Caco-2 (cell line): ENCODE measurements at regions of chr7 and their contacts with region 1.

Region 1: DNA sequence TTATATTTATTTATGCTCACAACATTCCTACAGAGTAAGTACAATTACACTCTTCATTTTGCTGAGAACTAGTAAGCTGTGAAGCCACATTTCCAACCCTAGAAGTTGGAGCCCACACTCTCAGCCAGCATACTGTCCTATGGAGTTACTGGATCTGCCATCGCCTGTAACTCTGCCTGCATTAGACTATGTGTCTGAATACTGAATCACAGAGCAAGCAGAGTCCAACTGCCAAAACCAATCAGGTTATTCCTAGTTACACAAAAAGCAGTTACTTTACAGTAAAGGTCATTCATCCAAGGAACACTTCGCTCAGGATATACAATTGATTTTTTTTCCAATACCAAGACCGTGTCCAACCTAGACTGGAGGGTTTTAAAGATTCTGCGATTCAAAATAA is 21.5 kb downstream of the CTAGE6 start:
- DNase-seq: no peak
- H3K4me3 ChIP-seq: no peak overlapping the region
- H3K4me3 Mint-ChIP-seq: no peak overlapping the region
- H3K27ac Mint-ChIP-seq: no peak overlapping the region
- H3K4me1 ChIP-seq: no peaks in the 10 kb centered on the region
- H3K4me1 Mint-ChIP-seq: no peaks in the 10 kb centered on the region
- H3K27me3 ChIP-seq: no peaks in the 10 kb centered on the region
- H3K27me3 Mint-ChIP-seq: peaks cover 15% of the 10 kb centered on the region
- CTCF ChIP-seq: no peak

Region 2: DNA sequence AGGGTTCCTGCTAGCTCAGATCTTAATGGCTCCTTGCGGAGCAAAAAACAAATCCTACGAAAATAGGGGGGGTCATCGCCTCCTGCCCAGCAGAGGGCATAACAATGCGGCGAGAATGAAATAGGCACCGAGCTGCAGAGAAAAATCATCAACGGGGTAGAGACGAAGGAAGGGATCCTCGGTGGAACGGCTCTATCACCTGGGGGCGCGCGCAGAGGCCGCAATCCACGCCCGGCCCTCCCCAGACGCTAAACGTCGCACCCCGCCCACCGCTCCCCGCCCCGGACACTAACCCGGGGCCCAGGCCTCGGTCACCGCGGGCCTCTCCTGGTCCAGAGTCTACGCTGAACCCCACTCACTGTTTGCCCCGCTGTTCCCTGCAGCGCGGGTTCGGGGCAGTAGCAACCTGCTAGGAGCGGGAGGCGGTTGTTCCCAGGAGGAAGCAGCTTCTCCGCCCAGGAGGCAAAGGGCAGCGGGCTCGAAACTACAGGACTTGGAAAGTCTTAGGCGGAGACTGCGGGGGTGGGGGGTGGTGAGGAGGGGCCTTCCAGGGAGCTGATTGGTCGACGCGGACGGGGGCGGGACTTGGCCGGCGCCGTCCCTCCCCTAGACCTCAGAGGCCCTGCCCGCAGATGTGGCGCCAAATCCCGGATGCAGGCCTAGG is 165.8 kb after region 1 on chr7 and contains the start of gene TCAF1:
- CTCF ChIA-PET with region 1: no interaction called
- POLR2A ChIA-PET with region 1: no interaction called
- intact Hi-C with region 1: no loop called
- DNase-seq: peak; percentile 96 to 98
- H3K4me3 ChIP-seq: peak within 1 kb of the TSS; percentile 90
- H3K4me3 Mint-ChIP-seq: peak within 1 kb of the TSS; percentile 92
- H3K27ac Mint-ChIP-seq: peak within 1 kb of the TSS; percentile 94
- H3K4me1 ChIP-seq: peaks cover 25% of the 10 kb centered on the region
- H3K4me1 Mint-ChIP-seq: peaks cover 36% of the 10 kb centered on the region
- H3K27me3 ChIP-seq: no peaks in the 10 kb centered on the region
- H3K27me3 Mint-ChIP-seq: no peaks in the 10 kb centered on the region
- CTCF ChIP-seq: peak; percentile 14 to 63
- total RNA-seq, gene TCAF1: 92.3 and 95.1 TPM in 2 replicates

Region 3: DNA sequence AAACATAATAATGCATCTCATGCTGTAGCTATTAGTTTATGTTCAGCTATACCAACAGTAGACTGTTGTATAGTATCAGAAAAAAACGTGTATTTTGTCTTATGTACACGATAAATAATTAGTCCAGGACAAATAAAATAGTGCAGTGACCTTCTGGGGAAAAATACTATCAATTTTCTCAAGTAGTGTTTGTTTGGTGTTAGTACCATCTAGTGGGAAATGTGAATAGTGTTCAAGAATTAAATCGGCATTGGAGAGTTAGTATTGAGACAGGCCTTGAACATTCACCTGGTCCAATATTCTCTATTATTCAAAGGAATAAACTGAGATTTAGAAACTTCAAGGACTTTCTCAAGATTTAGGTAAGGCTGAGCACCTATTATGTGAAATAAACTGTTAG is 291.1 kb after region 1 on chr7:
- CTCF ChIA-PET with region 1: no interaction called
- POLR2A ChIA-PET with region 1: no interaction called
- intact Hi-C with region 1: loop called (anchors 5 kb)
- DNase-seq: no peak
- H3K4me3 ChIP-seq: no peak overlapping the region
- H3K4me3 Mint-ChIP-seq: no peak overlapping the region
- H3K27ac Mint-ChIP-seq: no peak overlapping the region
- H3K4me1 ChIP-seq: peaks cover 36% of the 10 kb centered on the region
- H3K4me1 Mint-ChIP-seq: peaks cover 27% of the 10 kb centered on the region
- H3K27me3 ChIP-seq: no peaks in the 10 kb centered on the region
- H3K27me3 Mint-ChIP-seq: no peaks in the 10 kb centered on the region
- CTCF ChIP-seq: peak; percentile 40 to 59